Colonic mucosa (tissue), 4 donors: ENCODE measurements at regions of chr3 and their contacts with region 1.

Region 1: DNA sequence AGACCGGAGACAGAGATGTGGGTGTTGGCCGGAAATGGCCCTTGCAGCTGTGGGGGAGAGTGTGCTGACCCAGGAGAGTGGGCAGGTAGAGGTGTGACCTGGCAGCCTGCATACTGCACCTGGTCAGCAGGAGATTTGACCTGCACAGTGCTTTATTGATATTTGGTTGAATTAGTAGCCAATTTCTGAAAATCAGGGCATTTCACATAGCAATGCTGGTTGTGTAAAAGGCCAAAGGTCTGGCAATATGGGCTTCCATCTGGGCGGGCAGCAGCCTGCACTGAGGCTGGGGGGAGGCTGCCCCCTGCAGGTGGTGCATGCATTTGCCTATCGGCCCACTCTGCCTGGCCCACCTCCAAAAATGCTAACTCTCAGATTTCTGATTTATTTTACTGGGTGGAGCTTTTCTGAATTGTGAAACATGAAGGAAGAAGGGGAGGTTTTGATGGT is 9.4 kb upstream of the MGLL start:
- DNase-seq: peak; percentile 81
- H3K4me3 ChIP-seq: no peak overlapping the region
- H3K27ac ChIP-seq: no peak overlapping the region
- H3K4me1 ChIP-seq: no peaks in the 10 kb centered on the region
- H3K27me3 ChIP-seq: no peaks in the 10 kb centered on the region
- CTCF ChIP-seq: peak; percentile 85

Region 2: DNA sequence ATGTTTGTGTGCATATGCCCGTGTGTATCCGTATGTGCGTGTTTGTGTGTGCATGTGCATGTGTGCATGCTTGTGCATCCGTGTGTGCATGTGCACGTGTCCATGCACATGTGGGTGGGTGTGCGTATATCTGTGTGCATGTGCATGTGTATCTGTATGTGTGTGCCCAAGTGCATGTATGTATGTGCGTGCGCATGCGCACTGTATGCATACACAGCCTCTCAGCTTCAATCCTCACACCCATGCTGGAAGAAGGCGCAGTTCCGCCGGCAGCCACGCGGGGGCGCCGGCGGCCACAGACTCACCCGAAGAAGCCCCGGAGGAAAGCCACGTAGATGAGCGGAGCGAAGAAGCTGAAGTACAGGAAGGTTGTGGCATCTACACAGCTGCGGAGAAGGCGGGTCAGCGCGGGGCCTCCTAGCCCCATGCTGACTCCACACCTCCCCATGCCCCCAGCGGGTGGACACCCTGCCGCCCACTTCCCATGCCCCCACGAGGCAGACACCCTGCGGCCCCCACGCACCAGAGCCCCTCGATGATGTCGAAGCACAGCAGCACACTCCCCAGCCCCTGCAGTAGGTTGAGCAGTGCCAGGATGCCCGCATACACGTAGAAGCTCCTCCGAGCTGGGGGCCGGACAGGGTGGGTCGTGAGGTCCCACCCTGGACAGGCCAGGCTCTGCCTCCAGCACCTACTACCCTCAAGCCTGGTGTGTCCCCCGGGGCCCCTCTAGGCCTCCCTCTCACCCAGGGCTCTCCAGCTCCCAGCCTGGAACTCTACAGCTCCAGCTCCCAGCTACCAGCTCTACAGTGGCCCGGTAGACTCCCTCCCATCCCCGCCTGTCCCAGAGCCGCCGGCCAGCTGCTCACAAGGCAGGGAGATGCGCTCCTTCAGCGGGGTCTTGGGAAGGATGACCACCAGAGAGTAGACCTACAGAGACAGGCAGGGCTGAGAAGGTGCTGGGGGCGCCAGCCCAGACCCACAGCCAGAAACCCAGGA is 256.6 kb before region 1 on chr3:
- intact Hi-C with region 1: loop called (anchors 10 kb)
- DNase-seq: peak; percentile 91
- H3K4me3 ChIP-seq: no peak overlapping the region
- H3K27ac ChIP-seq: no peak overlapping the region
- H3K4me1 ChIP-seq: no peaks in the 10 kb centered on the region
- H3K27me3 ChIP-seq: no peaks in the 10 kb centered on the region
- CTCF ChIP-seq: peak; percentile 98

Region 3: GRCh38 chr3:127652231-127652995 is 179.3 kb before region 1 on chr3:
- intact Hi-C with region 1: loop called (anchors 5 kb)
- DNase-seq: no peak
- H3K4me3 ChIP-seq: no peak overlapping the region
- H3K27ac ChIP-seq: no peak overlapping the region
- H3K4me1 ChIP-seq: no peaks in the 10 kb centered on the region
- H3K27me3 ChIP-seq: no peaks in the 10 kb centered on the region
- CTCF ChIP-seq: peak; percentile 88

Region 4: GRCh38 chr3:127690823-127691452 is 140.8 kb before region 1 on chr3:
- intact Hi-C with region 1: loop called (anchors 5 kb)
- DNase-seq: no peak
- H3K4me3 ChIP-seq: no peak overlapping the region
- H3K27ac ChIP-seq: no peak overlapping the region
- H3K4me1 ChIP-seq: no peaks in the 10 kb centered on the region
- H3K27me3 ChIP-seq: no peaks in the 10 kb centered on the region
- CTCF ChIP-seq: peak; percentile 20

Region 5: GRCh38 chr3:127970966-127971592 is 139.3 kb after region 1 on chr3:
- intact Hi-C with region 1: loop called (anchors 5 kb)
- DNase-seq: peak; percentile 43
- H3K4me3 ChIP-seq: no peak overlapping the region
- H3K27ac ChIP-seq: no peak overlapping the region
- H3K4me1 ChIP-seq: no peaks in the 10 kb centered on the region
- H3K27me3 ChIP-seq: no peaks in the 10 kb centered on the region
- CTCF ChIP-seq: peak; percentile 55

Region 6: DNA sequence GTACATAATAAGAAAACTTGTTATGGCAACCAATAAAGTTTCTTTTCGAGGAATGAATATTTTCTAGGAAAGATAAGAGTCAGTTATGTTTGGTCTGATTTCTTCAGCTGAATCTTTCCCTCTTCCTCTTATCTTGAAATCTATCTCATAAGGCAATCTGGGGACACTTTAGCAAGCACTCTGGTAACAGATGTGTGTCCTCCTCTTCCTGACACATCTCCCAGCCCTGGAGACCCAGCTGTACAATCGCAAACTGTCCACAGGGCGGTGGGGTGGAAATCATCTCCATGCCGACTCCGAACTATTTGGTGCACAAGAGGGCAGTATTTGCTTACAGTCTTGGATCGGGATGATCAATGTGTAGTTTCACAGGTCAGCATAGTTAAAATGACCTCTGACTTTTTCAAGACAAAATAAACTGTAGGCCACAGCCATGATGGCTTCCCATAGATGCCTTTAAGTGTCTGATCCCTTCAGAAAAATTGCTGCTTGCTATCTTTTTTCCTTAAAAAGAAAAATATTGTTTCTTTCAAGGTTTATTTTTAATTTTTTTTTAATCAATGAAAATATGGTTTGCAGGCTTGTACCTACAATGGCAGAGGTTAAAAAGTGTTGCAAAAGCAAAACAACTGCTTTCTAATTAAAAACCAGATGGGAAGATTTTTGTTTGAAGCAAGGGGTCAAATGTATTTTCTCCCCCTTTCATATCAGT is 339.2 kb after region 1 on chr3:
- intact Hi-C with region 1: no loop called
- DNase-seq: peak; percentile 51
- H3K4me3 ChIP-seq: no peak overlapping the region
- H3K27ac ChIP-seq: no peak overlapping the region
- H3K4me1 ChIP-seq: no peaks in the 10 kb centered on the region
- H3K27me3 ChIP-seq: no peaks in the 10 kb centered on the region
- CTCF ChIP-seq: peak; percentile 55